CD8-positive, alpha-beta T cell (primary cell): ENCODE measurements at regions of chr9 and their contacts with region 1.

Region 1: DNA sequence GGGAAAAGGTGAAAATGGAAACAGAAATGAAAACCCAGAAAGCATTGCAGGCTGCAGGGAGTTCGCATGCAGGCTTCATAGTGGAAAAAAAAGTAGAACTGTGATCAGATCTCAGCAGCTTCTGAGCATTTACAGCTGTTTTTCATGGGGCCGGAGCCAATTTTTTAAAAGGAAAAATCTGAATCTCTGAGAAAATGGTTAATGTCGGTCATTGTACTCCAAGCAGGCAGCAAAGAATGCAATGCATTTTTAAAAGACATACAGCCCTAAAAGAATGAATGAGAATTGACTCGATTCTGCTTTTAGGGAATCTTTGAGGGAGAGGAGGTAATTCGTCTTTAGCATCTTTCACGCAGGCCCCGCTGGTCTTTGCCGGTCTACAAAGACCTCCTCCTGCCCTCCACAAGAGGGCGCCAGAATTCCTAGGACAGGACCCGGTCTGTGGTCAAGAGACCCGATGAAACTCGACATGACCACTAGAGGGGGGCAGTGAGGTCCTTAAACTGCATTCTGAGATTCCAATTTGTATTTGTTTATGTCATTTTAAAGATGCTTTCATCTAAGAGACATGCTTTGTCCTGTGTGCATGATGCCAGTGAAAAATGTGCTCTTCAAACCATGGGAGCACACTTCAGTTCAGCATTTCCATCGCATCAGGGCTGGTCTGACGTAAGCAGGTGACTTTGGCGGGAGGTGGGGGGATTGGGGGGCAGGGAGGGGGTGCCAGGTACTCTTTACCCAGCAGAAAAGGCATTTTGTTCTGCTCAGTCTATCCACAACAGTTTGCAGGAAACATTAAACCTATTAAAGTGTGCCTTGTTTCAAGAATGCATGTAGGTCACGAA is 43.7 kb upstream of the TMEM252 start:
- DNase-seq: peak; percentile 58 to 90 (median 77)
- ATAC-seq: peak; percentile 79
- H3K4me3 ChIP-seq: no peak overlapping the region
- H3K4me3 Mint-ChIP-seq: no peak overlapping the region
- H3K27ac ChIP-seq: no peak overlapping the region
- H3K27ac Mint-ChIP-seq: no peak overlapping the region
- H3K4me1 ChIP-seq: no peaks in the 10 kb centered on the region
- H3K4me1 Mint-ChIP-seq: peaks cover 2% of the 10 kb centered on the region
- H3K27me3 ChIP-seq: no peaks in the 10 kb centered on the region
- H3K27me3 Mint-ChIP-seq: peaks cover 8% of the 10 kb centered on the region
- CTCF ChIP-seq: peak; percentile 81

Region 2: GRCh38 chr9:69027355-69028096 is 443.1 kb after region 1 on chr9:
- CTCF ChIA-PET with region 1: interaction called, 5 read pairs
- POLR2A ChIA-PET with region 1: no interaction called
- intact Hi-C with region 1: loop called in 1 of 2 experiments (anchors 1 kb)
- DNase-seq: peak in 7 of 9 experiments; percentile 15 to 76 (median 35)
- ATAC-seq: peak; percentile 77
- H3K4me3 ChIP-seq: no peak overlapping the region
- H3K4me3 Mint-ChIP-seq: no peak overlapping the region
- H3K27ac ChIP-seq: no peak overlapping the region
- H3K27ac Mint-ChIP-seq: no peak overlapping the region
- H3K4me1 ChIP-seq: peaks cover 35% of the 10 kb centered on the region
- H3K4me1 Mint-ChIP-seq: peaks cover 38% of the 10 kb centered on the region
- H3K27me3 ChIP-seq: no peaks in the 10 kb centered on the region
- H3K27me3 Mint-ChIP-seq: no peaks in the 10 kb centered on the region
- CTCF ChIP-seq: peak; percentile 70